Activated CD8-positive, alpha-beta T cell treated with anti-CD3 and anti-CD28 coated beads for 36 hours (primary cell): ENCODE measurements at regions of chr2 and their contacts with region 1.

Region 1: DNA sequence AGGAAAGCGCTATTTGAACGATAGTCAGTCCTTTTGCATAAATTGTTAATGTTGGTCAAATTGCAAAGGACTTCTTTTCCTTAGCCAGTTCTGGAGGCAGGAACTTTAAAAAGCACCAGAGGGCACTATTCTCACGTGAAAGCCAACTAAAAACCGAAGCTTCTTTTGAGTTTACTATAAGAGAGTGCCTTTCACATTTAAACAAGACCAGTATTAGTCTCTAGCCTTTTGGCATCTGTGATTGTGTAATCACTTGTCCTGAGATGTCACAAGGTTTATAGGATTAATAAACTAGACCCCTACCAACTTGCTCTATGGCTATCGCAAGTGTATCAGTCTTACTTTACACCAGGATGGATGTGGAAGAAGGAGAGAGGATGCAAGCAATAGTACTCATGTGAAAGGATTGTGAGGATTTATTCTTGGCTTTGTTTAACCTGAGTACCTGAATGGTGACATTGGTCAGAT is 14.4 kb upstream of the STAT4 start:
- DNase-seq: no peak
- ATAC-seq: peak; percentile 84
- H3K4me3 Mint-ChIP-seq: no peak overlapping the region
- H3K27ac Mint-ChIP-seq: no peak overlapping the region
- H3K4me1 Mint-ChIP-seq: peaks cover 25% of the 10 kb centered on the region
- H3K27me3 Mint-ChIP-seq: no peaks in the 10 kb centered on the region
- CTCF ChIP-seq: peak; percentile 84

Region 2: GRCh38 chr2:191202881-191203397 is 37.7 kb after region 1 on chr2:
- CTCF ChIA-PET with region 1: interaction called, 11 read pairs
- POLR2A ChIA-PET with region 1: no interaction called
- intact Hi-C with region 1: loop called (anchors 5 kb)
- DNase-seq: peak; percentile 61
- ATAC-seq: peak; percentile 43
- H3K4me3 Mint-ChIP-seq: peak overlapping the region; percentile 19
- H3K27ac Mint-ChIP-seq: peak overlapping the region; percentile 83
- H3K4me1 Mint-ChIP-seq: peaks cover 55% of the 10 kb centered on the region
- H3K27me3 Mint-ChIP-seq: no peaks in the 10 kb centered on the region
- CTCF ChIP-seq: no peak

Region 3: GRCh38 chr2:191302459-191303139 is 137.4 kb after region 1 on chr2:
- CTCF ChIA-PET with region 1: interaction called, 10 read pairs
- POLR2A ChIA-PET with region 1: no interaction called
- intact Hi-C with region 1: no loop called
- DNase-seq: peak; percentile 23
- ATAC-seq: peak; percentile 55
- H3K4me3 Mint-ChIP-seq: no peak overlapping the region
- H3K27ac Mint-ChIP-seq: no peak overlapping the region
- H3K4me1 Mint-ChIP-seq: peaks cover 1% of the 10 kb centered on the region
- H3K27me3 Mint-ChIP-seq: peaks cover 4% of the 10 kb centered on the region
- CTCF ChIP-seq: no peak

Region 4: DNA sequence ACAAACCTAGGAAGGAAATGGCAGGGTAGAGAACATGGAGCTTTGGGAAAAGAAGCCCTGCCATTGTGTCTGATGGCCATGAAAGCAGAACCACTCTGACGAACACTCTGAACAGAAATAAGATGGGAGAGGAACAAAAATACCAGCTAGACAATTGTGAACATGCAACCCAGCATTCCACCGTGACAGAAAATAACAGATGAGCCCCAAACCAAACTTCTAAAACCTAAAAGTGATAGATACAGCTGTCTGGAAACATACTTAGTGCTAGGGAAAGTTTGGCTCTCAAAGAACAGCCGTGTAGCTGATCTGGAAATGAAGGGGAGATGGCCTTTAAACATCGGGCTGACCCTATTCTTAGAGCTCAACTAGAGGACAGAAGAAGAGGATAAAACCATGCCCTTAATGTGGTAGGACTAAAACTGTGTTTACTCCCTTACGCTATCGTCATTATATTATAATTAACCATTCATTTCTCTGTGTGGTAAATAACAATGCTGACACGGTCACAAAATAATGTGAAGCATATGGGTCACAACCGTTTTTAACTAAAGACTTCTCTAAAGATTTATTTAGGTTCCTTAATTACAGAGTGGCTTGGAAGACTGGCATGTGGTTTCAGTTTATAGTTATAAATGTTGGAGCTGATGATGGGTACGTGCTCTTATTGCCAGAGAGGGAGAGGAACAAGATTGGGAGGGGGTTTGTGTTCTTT is 160.6 kb after region 1 on chr2:
- CTCF ChIA-PET with region 1: no interaction called
- POLR2A ChIA-PET with region 1: no interaction called
- intact Hi-C with region 1: no loop called
- DNase-seq: no peak
- ATAC-seq: no peak
- H3K4me3 Mint-ChIP-seq: no peak overlapping the region
- H3K27ac Mint-ChIP-seq: no peak overlapping the region
- H3K4me1 Mint-ChIP-seq: peaks cover 16% of the 10 kb centered on the region
- H3K27me3 Mint-ChIP-seq: no peaks in the 10 kb centered on the region
- CTCF ChIP-seq: no peak

Region 5: GRCh38 chr2:191369036-191369435 is 203.8 kb after region 1 on chr2:
- CTCF ChIA-PET with region 1: interaction called, 4 read pairs
- POLR2A ChIA-PET with region 1: no interaction called
- intact Hi-C with region 1: loop called (anchors 10 kb)
- DNase-seq: no peak
- ATAC-seq: no peak
- H3K4me3 Mint-ChIP-seq: no peak overlapping the region
- H3K27ac Mint-ChIP-seq: no peak overlapping the region
- H3K4me1 Mint-ChIP-seq: no peaks in the 10 kb centered on the region
- H3K27me3 Mint-ChIP-seq: no peaks in the 10 kb centered on the region
- CTCF ChIP-seq: peak; percentile 3

Region 6: DNA sequence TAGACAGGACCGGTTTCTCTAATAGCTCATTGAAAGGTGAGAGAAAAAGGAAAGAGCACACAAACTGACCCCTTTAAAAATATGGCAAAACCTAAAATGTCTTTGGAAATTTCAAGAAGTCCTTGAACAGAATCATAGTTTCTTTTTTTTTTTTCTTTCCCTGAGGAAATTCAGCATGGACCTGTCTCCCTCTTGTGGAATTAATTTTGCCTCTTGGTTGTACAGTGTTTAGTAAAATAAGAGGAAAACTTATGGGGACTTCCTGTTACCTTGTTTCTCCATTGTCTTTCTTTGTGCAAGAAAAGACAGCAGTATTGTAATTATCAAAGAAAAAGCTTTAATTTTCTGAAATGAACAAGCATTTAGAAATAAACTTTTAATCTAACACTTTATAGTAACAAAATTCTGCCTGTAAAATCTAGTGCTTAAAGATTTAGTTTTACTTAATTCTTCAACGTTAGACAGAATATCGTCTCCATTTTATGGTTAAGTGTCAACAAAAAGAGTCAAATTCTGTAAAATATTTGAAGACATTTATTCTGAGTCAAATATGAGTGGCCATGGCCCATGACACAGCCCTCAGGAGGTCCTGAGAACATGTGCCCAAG is 336.5 kb after region 1 on chr2:
- CTCF ChIA-PET with region 1: interaction called, 15 read pairs
- POLR2A ChIA-PET with region 1: interaction called, 3 read pairs
- intact Hi-C with region 1: no loop called
- DNase-seq: no peak
- ATAC-seq: no peak
- H3K4me3 Mint-ChIP-seq: no peak overlapping the region
- H3K27ac Mint-ChIP-seq: no peak overlapping the region
- H3K4me1 Mint-ChIP-seq: no peaks in the 10 kb centered on the region
- H3K27me3 Mint-ChIP-seq: no peaks in the 10 kb centered on the region
- CTCF ChIP-seq: no peak

Region 7: DNA sequence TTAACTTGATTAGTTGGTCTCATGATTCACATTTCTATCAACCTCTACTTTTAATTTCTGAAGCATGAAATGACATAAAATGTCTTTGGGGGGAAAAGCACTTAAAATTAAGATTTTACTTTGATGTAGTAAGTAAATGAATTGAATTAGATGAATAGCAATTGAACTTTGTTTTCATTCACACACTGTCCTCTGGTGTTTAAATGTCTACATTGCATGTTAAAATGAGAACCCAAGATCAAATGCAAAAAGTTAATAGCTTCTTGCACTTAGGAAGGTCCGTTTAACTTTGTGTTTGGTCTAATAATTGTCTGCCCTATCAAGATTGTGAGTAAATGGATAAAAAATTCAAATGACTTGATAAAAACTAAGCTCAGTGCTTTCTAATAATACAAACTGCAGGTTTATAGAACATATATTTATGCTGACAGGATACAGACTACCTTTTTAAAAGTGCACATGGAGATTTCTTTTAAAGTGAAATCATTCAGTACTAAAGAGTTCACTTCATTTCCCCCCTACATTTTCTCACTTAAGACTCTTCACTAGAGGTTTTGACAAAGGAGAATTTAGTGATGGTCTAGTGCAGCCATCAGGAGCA is 356.5 kb after region 1 on chr2:
- CTCF ChIA-PET with region 1: interaction called, 51 read pairs
- POLR2A ChIA-PET with region 1: interaction called, 4 read pairs
- intact Hi-C with region 1: loop called (anchors 1 kb)
- DNase-seq: no peak
- ATAC-seq: peak; percentile 56
- H3K4me3 Mint-ChIP-seq: no peak overlapping the region
- H3K27ac Mint-ChIP-seq: no peak overlapping the region
- H3K4me1 Mint-ChIP-seq: no peaks in the 10 kb centered on the region
- H3K27me3 Mint-ChIP-seq: no peaks in the 10 kb centered on the region
- CTCF ChIP-seq: peak; percentile 70